BJ (cell line): ENCODE measurements at regions of chr10 and their contacts with region 1.

Region 1: GRCh38 chr10:97196223-97197029 is 10.7 kb upstream of the SLIT1 start:
- DNase-seq: no peak
- H3K4me3 ChIP-seq: peak overlapping the region; percentile 44
- H3K27me3 ChIP-seq: peaks cover 10% of the 10 kb centered on the region
- CTCF ChIP-seq: peak; percentile 76

Region 2: GRCh38 chr10:96287392-96288105 is 908.9 kb before region 1 on chr10:
- CTCF ChIA-PET with region 1: no interaction called
- POLR2A ChIA-PET with region 1: no interaction called
- DNase-seq: no peak
- H3K4me3 ChIP-seq: no peak overlapping the region
- H3K27me3 ChIP-seq: no peaks in the 10 kb centered on the region; the same call in 1 of the 2 replicates
- CTCF ChIP-seq: no peak

Region 3: GRCh38 chr10:97065128-97065527 is 131.3 kb before region 1 on chr10:
- CTCF ChIA-PET with region 1: no interaction called
- POLR2A ChIA-PET with region 1: no interaction called
- DNase-seq: no peak
- H3K4me3 ChIP-seq: no peak overlapping the region
- H3K27me3 ChIP-seq: peaks cover 4% of the 10 kb centered on the region; the same call in 1 of the 2 replicates
- CTCF ChIP-seq: no peak

Region 4: GRCh38 chr10:97081621-97082235 is 114.7 kb before region 1 on chr10:
- CTCF ChIA-PET with region 1: interaction called, 14 read pairs
- POLR2A ChIA-PET with region 1: no interaction called
- DNase-seq: no peak
- H3K4me3 ChIP-seq: no peak overlapping the region
- H3K27me3 ChIP-seq: peaks cover 7% of the 10 kb centered on the region; the same call in 1 of the 2 replicates
- CTCF ChIP-seq: peak; percentile 86

Region 5: DNA sequence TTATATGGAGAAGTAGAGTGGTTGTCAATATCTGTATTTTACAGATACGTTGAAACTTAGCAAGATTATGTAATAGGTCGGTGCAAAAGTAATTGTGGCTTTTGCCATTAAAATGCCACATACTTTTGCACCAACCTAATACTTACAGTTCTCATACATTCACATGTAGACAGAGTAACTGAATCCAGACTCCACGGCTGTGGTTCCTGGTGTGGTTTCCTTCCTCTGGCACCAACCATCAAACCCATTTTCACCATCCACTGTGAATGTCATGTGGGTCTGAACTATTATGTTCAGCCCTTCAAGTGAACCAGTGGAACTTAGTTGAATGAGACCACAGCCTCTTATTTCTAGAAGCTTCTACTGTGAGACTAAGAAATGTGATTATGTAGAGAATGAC is 20.9 kb after region 1 on chr10:
- CTCF ChIA-PET with region 1: interaction called, 125 read pairs
- POLR2A ChIA-PET with region 1: no interaction called
- DNase-seq: no peak
- H3K4me3 ChIP-seq: no peak overlapping the region
- H3K27me3 ChIP-seq: no peaks in the 10 kb centered on the region
- CTCF ChIP-seq: no peak

Region 6: DNA sequence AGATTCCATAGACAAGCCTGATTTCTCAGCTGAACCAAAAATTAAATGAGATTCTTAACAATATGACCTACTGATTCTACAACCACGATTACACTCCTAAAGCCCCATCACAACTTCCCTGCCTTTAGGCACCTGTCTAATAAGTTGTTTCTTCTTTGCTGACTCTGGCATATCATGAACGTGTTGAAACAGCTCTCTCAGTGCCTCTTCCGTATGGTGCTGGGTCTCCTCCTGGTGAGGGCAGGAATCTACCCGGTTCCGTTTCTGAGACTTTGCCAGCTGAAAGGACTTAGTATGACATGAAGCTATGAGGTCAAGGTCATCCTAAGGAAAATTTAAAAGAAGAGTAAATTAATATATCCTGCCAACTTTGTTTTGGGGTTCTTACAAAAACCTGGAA is 47.4 kb after region 1 on chr10:
- CTCF ChIA-PET with region 1: no interaction called
- POLR2A ChIA-PET with region 1: no interaction called
- DNase-seq: no peak
- H3K4me3 ChIP-seq: no peak overlapping the region
- H3K27me3 ChIP-seq: no peaks in the 10 kb centered on the region
- CTCF ChIP-seq: no peak

Region 7: DNA sequence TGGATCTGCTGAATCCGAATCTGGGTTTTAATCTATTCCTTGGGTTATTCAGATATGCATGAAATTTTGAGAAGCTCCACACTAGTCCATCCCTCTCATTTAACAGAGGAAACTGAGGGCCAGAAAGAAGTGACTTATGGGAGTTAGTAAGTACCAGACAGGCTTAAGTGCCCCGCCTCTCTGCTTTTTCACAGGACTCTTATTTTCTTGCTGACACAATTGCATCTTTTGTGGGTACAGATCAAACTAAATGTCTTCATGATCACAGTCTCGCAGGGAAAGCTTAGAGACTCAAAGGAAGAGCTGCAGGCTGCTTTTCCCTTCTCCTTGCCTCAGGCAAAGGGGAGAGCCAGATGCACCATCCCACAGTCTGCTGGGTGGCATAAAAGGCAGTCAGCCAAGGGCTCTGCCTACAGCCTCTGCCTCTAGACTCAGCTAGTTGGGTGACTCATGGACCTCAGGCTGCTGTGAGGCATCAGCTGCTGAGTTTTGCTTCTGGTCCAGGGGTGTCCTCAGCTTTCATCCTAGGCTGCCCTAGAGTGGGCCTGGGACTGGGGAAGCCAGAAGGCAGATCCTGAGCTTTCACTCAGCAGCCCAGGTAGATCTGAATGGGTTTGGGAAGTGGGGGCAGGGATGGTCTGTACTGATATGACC is 664.8 kb after region 1 on chr10:
- CTCF ChIA-PET with region 1: no interaction called
- POLR2A ChIA-PET with region 1: no interaction called
- DNase-seq: no peak
- H3K4me3 ChIP-seq: no peak overlapping the region
- H3K27me3 ChIP-seq: peaks cover 9% of the 10 kb centered on the region
- CTCF ChIP-seq: no peak